Tibial artery (tissue), 4 donors: ENCODE measurements at regions of chr10 and their contacts with region 1.

Region 1: GRCh38 chr10:14195433-14195832 is 135.3 kb downstream of the FRMD4A start:
- DNase-seq: no peak
- H3K4me3 ChIP-seq: no peak overlapping the region
- H3K27ac ChIP-seq: no peak overlapping the region
- H3K4me1 ChIP-seq: no peaks in the 10 kb centered on the region
- H3K27me3 ChIP-seq: peaks cover 0 to 38% of the 10 kb centered on the region in 2 donors
- CTCF ChIP-seq: no peak

Region 2: GRCh38 chr10:14478604-14479003 is 283.2 kb after region 1 on chr10:
- intact Hi-C with region 1: loop called (anchors 5 kb)
- DNase-seq: peak; percentile 54 to 69
- H3K4me3 ChIP-seq: no peak overlapping the region
- H3K27ac ChIP-seq: no peak overlapping the region
- H3K4me1 ChIP-seq: peaks cover 0 to 10% (median 0%) of the 10 kb centered on the region in 4 donors
- H3K27me3 ChIP-seq: no peaks in the 10 kb centered on the region
- CTCF ChIP-seq: peak; percentile 57